Esophagus muscularis mucosa (tissue), 4 donors: ENCODE measurements at regions of chr20 and their contacts with region 1.

Region 1: DNA sequence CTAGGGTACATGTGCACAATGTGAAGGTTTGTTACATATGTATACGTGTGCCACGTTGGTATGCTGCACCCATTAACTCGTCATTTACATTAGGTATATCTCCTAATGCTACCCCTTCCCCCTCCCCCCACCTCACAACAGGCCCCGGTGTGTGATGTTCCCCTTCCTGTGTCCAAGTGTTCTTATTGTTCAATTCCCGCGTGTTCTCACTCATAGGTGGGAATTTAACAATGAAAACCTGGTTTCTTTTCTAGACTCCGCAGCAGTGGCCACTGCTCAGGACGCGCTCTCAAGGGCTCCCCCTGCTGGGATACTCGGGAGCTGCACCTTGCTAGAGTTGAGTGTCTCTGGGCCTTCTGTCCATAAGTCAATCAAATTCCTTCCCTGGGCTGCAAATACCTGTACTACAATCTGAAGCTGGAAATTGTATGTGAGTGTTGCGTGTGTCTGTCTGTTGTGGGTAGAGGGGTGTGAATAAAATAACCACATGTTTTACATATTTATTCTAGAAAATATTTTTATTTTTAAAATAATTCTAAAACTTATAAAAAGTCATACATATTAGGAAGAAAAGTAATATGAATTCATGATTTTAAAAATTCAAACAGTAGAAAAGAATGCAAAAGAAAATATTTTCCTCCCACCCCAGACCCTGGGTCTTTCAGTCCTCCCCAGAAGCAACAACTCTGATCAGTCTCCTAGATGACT is 8.2 kb upstream of the CEP250 start:
- DNase-seq: peak; percentile 97
- H3K4me3 ChIP-seq: peak overlapping the region; percentile 44 to 55 (median 50)
- H3K27ac ChIP-seq: no peak overlapping the region
- H3K4me1 ChIP-seq: peaks cover 0 to 7% (median 5%) of the 10 kb centered on the region in 4 donors
- H3K27me3 ChIP-seq: peaks cover 0 to 11% (median 0%) of the 10 kb centered on the region in 4 donors
- CTCF ChIP-seq: peak; percentile 92 to 100 (median 95)
- EP300 ChIP-seq: no peak
- POLR2A ChIP-seq: no peak

Region 2: DNA sequence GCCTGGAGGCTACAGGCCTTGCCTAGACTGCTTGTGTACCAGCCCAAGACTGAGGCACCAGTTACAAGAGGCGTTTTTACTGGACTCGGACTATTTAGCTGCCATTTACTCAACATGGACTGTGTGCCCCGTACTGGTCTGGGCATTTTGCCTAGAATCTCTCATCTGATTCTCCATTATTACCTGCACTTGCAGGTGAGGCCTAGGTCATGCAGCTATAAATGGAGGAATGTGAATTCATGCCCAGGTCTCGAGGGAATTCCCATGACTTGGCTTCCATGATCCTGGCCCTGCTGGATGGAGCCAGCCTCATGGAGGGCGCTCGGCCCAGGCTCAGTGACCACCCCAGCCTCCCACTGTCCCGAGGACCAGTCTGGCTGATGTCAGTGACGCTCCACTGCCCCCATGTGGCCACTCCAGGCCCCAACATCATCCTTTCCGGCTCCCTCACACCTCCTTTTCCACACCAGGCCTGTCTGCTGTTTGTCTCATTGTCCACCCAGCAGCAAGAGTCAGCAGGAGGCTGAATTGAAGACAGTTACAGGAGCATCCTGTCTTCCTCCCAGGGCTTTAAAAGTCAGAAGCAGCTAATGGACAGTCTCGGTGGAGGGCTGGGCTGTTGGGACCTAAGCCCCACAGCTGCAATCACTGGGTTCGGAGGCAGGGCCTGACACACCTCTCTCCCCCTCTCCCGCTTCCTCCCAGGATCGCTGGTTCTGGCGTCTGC is 178.0 kb before region 1 on chr20:
- intact Hi-C with region 1: no loop called
- DNase-seq: no peak
- H3K4me3 ChIP-seq: no peak overlapping the region
- H3K27ac ChIP-seq: peak overlapping the region in 1 of 4 donors; percentile 16
- H3K4me1 ChIP-seq: peaks cover under 1 to 28% (median 17%) of the 10 kb centered on the region in 4 donors
- H3K27me3 ChIP-seq: no peaks in the 10 kb centered on the region
- CTCF ChIP-seq: peak; percentile 64 to 85 (median 67)
- EP300 ChIP-seq: no peak
- POLR2A ChIP-seq: no peak

Region 3: DNA sequence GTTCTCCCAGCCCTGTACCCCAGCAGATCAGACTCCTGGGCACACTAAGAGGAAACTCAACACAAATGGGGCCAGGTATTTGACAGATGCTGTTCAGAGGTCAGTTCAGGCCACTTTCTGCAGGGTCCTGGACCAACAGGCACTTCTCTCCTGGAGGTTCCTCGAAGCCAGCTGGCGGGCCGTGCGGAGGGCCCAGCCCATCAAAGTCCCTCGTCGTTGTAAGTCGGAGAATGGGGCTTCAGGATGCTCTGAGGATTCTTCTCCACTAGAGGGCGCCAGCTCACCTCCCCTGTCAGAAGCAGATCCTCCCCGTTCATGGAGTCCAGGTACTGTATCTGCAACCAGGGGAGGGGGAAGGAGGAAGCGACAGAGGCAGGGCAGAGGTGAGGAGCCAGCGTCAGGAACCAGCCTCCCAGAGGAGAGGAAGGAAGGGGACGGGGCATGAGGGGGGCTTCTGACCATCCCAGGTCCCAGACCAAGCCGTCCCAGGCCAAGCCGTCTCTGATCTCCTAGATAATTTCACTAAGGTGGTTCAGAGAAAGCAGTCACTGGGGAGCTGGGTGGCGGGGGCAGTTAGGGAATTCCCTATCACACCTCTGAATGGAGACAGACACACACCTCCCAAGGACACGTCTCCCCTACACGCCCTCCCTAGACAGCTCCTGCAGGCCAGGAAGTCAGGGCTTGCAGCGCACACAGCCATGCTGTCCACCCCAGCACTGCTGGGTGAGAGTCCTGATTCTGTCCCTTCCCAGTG is 143.3 kb before region 1 on chr20:
- intact Hi-C with region 1: loop called (anchors 2 kb)
- DNase-seq: peak; percentile 96
- H3K4me3 ChIP-seq: no peak overlapping the region
- H3K27ac ChIP-seq: peak overlapping the region in 1 of 4 donors; percentile 3
- H3K4me1 ChIP-seq: peaks cover 22 to 65% (median 63%) of the 10 kb centered on the region in 4 donors
- H3K27me3 ChIP-seq: no peaks in the 10 kb centered on the region
- CTCF ChIP-seq: peak; percentile 86 to 98 (median 91)
- EP300 ChIP-seq: no peak
- POLR2A ChIP-seq: no peak

Region 4: GRCh38 chr20:35318502-35319157 is 128.6 kb before region 1 on chr20:
- intact Hi-C with region 1: no loop called
- DNase-seq: no peak
- H3K4me3 ChIP-seq: no peak overlapping the region
- H3K27ac ChIP-seq: no peak overlapping the region
- H3K4me1 ChIP-seq: peaks cover 9 to 30% (median 21%) of the 10 kb centered on the region in 4 donors
- H3K27me3 ChIP-seq: no peaks in the 10 kb centered on the region
- CTCF ChIP-seq: no peak
- EP300 ChIP-seq: no peak
- POLR2A ChIP-seq: no peak